ENCODE measurements at regions of chr10 and their contacts with region 1.

Region 1: DNA sequence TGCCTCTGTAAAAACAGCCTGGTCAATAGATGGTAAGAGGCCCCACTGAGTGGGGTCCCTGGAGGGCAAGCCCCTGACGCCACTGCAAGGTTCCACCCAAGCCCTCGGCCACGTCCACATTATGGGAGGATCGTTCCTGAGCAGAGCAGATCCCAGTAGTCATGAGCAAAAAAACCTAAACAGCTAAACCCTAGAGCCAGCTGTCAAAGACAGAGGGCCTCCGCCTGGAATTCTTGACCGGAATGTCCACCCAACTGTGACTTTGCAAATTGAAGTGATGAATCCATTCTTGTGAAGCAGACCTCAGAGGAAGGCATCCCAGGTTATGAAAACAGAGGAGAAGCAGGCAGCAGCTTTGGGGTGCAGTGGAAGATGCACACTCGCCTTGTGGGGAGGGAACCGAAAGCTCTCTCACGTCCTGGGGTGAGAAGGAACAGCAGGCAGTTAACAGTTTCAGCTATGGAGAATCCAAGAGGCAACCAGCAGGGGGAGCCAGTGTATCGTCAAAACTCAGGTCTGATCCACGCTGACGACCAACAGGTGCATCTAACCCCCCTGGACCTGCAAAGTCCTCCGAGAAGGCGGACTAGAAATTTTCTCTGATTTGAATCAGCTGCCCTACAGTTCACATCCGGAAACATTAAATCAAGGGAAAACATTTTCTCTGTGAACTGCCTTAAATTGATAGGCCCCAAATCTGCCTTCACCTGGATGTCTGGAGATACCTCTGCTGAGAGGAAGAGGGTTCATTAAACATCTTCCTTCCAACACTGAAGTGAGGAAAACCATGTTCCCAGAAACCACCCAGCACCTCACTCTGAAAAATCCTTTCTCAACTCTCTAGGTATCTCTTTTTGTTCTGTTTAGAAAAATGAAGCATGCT is 139.1 kb upstream of the PFKP start:
- H3K4me3 ChIP-seq: no peak overlapping the region
- H3K27ac ChIP-seq: no peak overlapping the region
- H3K4me1 ChIP-seq: peaks cover 6% of the 10 kb centered on the region
- CTCF ChIP-seq: peak; percentile 58

Region 2: DNA sequence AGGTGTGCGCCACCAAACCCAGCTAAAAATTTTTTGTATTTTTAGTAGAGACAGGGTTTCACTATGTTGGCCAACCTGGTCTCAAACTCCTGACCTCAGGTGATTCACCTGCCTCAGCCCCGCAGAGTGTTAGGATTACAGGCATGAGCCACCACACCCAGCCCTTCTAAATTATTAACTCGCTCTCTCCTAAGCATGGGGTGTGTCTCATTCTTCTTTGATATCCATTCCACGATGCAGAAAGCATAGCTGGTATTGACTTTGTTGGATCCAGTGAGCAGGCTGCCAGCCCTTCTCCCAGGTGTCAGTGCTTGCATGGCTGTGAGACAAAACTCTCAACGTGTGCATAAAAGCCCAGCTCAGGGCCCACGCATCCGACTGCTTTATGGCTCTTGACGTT is 114.9 kb before region 1 on chr10:
- CTCF ChIA-PET with region 1: no interaction called
- POLR2A ChIA-PET with region 1: no interaction called
- H3K4me3 ChIP-seq: no peak overlapping the region
- H3K27ac ChIP-seq: no peak overlapping the region
- H3K4me1 ChIP-seq: no peaks in the 10 kb centered on the region
- CTCF ChIP-seq: no peak

Region 3: GRCh38 chr10:2913474-2913873 is 14.7 kb before region 1 on chr10:
- CTCF ChIA-PET with region 1: interaction called, 11 read pairs
- POLR2A ChIA-PET with region 1: no interaction called
- H3K4me3 ChIP-seq: no peak overlapping the region
- H3K27ac ChIP-seq: no peak overlapping the region
- H3K4me1 ChIP-seq: peaks cover 5% of the 10 kb centered on the region
- CTCF ChIP-seq: no peak

Region 4: GRCh38 chr10:2978111-2978510 is 49.9 kb after region 1 on chr10:
- CTCF ChIA-PET with region 1: interaction called, 20 read pairs
- POLR2A ChIA-PET with region 1: no interaction called
- H3K4me3 ChIP-seq: no peak overlapping the region
- H3K27ac ChIP-seq: no peak overlapping the region
- H3K4me1 ChIP-seq: no peaks in the 10 kb centered on the region
- CTCF ChIP-seq: peak; percentile 30; the same call in 1 of the 2 replicates